IMR-90 (cell line): ENCODE measurements at regions of chr17 and their contacts with region 1.

Region 1: GRCh38 chr17:76467366-76467765 is at the start of gene AANAT:
- DNase-seq: no peak
- ATAC-seq: no peak
- H3K4me3 ChIP-seq: no peak within 1 kb of the TSS
- H3K27ac ChIP-seq: no peak within 1 kb of the TSS
- H3K4me1 ChIP-seq: peaks cover 3% of the 10 kb centered on the region; the same call in 1 of the 2 replicates
- H3K27me3 ChIP-seq: 0 out of 2 replicates have a peak, but pooled peaks cover 5% of the 10 kb centered on the region
- CTCF ChIP-seq: no peak
- POLR2A ChIP-seq: no peak
- RAD21 ChIP-seq: no peak
- total RNA-seq, gene AANAT: not detected in 2 replicates

Region 2: GRCh38 chr17:76506408-76507349 is 39.3 kb after region 1 on chr17:
- CTCF ChIA-PET with region 1: interaction called, 7 read pairs
- POLR2A ChIA-PET with region 1: no interaction called
- dilution Hi-C with region 1: no loop called
- in situ Hi-C with region 1: loop called (anchors 5 kb)
- intact Hi-C with region 1: loop called (anchors 1 kb)
- DNase-seq: peak; percentile 54
- ATAC-seq: peak; percentile 88
- H3K4me3 ChIP-seq: no peak overlapping the region
- H3K27ac ChIP-seq: no peak overlapping the region
- H3K4me1 ChIP-seq: peaks cover 13% of the 10 kb centered on the region
- H3K27me3 ChIP-seq: peaks cover 13% of the 10 kb centered on the region
- CTCF ChIP-seq: peak; percentile 97
- POLR2A ChIP-seq: peak; percentile 42; the same call in 1 of the 2 replicates
- RAD21 ChIP-seq: peak; percentile 97

Region 3: DNA sequence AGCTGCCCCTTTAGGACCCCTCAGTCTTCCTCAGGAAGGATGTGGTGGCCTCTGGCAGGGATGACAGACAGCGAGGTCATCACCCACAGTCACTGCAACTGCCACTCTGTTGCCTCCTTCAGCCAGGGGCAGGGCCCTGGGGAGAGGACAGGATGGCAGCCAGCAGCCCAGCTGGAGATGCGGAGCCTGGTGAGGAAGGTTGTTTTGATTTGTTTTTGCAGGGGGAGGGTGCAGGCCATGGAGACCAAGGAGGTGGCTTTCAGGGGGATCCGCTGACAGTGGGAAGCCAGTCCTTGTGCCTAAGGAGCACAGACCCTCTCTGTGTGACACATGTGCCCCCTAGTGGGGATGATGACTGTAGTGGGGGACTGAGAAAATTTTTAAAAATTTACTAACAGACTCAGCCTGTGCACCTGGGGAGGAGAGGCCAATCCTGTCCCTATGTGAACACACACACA is 79.8 kb after region 1 on chr17:
- CTCF ChIA-PET with region 1: no interaction called
- POLR2A ChIA-PET with region 1: no interaction called
- dilution Hi-C with region 1: no loop called
- in situ Hi-C with region 1: no loop called
- intact Hi-C with region 1: loop called (anchors 1 kb)
- DNase-seq: peak; percentile 85
- ATAC-seq: peak; percentile 79
- H3K4me3 ChIP-seq: no peak overlapping the region
- H3K27ac ChIP-seq: peak overlapping the region; percentile 38
- H3K4me1 ChIP-seq: peaks cover 20% of the 10 kb centered on the region
- H3K27me3 ChIP-seq: no peaks in the 10 kb centered on the region
- CTCF ChIP-seq: peak; percentile 88
- POLR2A ChIP-seq: no peak
- RAD21 ChIP-seq: peak; percentile 85